CD4-positive, alpha-beta T cell (primary cell): ENCODE measurements at regions of chr5 and their contacts with region 1.

Region 1: GRCh38 chr5:142713121-142713706 is 27.3 kb upstream of the FGF1 start:
- DNase-seq: peak; percentile 70 to 93 (median 79)
- ATAC-seq: peak; percentile 93
- H3K4me3 ChIP-seq: peak overlapping the region; percentile 50
- H3K4me3 Mint-ChIP-seq: peak overlapping the region; percentile 76
- H3K27ac ChIP-seq: no peak overlapping the region
- H3K27ac Mint-ChIP-seq: no peak overlapping the region
- H3K4me1 ChIP-seq: peaks cover 15% of the 10 kb centered on the region
- H3K4me1 Mint-ChIP-seq: peaks cover 17% of the 10 kb centered on the region
- H3K27me3 ChIP-seq: peaks cover 0 to 3% of the 10 kb centered on the region in 2 experiments
- H3K27me3 Mint-ChIP-seq: peaks cover 9% of the 10 kb centered on the region
- CTCF ChIP-seq: peak; percentile 99

Region 2: DNA sequence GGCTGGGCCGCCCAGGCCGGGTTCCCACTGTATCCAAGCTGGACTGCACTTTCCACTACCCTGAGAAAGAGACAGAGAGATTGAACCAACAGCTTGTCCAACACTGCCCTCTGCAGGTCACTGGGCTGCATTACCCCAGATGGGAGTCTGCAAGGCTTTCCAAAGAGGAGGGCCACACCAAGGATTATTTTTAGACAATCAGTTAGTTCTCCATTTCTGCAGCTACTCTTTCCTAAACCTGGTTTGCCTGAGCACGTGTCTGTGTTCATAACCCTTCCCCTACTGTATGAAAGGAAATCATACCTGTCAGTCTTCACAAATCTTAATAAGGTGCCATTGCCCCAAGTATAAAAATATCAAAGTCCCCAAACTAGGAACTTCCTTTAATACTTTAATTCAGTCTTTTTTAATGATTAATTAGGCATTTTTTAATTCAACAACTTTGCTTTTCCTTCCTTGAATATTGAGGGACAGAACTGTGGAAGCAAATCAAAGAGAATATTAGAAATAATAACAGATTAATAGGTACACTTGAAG is 14.0 kb before region 1 on chr5:
- CTCF ChIA-PET with region 1: interaction called, 23 read pairs
- POLR2A ChIA-PET with region 1: no interaction called
- intact Hi-C with region 1: no loop called
- DNase-seq: peak; percentile 52 to 83 (median 72)
- ATAC-seq: peak; percentile 98
- H3K4me3 ChIP-seq: no peak overlapping the region
- H3K4me3 Mint-ChIP-seq: no peak overlapping the region
- H3K27ac ChIP-seq: no peak overlapping the region
- H3K27ac Mint-ChIP-seq: no peak overlapping the region
- H3K4me1 ChIP-seq: no peaks in the 10 kb centered on the region
- H3K4me1 Mint-ChIP-seq: no peaks in the 10 kb centered on the region
- H3K27me3 ChIP-seq: no peaks in the 10 kb centered on the region
- H3K27me3 Mint-ChIP-seq: no peaks in the 10 kb centered on the region
- CTCF ChIP-seq: peak; percentile 82

Region 3: GRCh38 chr5:142872795-142873194 is 159.6 kb after region 1 on chr5:
- CTCF ChIA-PET with region 1: interaction called, 9 read pairs
- POLR2A ChIA-PET with region 1: no interaction called
- intact Hi-C with region 1: loop called (anchors 1 to 2 kb)
- DNase-seq: peak in 2 of 14 experiments; percentile 17 to 34
- ATAC-seq: no peak
- H3K4me3 ChIP-seq: no peak overlapping the region
- H3K4me3 Mint-ChIP-seq: no peak overlapping the region
- H3K27ac ChIP-seq: no peak overlapping the region
- H3K27ac Mint-ChIP-seq: no peak overlapping the region
- H3K4me1 ChIP-seq: no peaks in the 10 kb centered on the region
- H3K4me1 Mint-ChIP-seq: no peaks in the 10 kb centered on the region
- H3K27me3 ChIP-seq: no peaks in the 10 kb centered on the region
- H3K27me3 Mint-ChIP-seq: no peaks in the 10 kb centered on the region
- CTCF ChIP-seq: no peak

Region 4: GRCh38 chr5:142888469-142889085 is 175.4 kb after region 1 on chr5:
- CTCF ChIA-PET with region 1: interaction called, 21 read pairs
- POLR2A ChIA-PET with region 1: no interaction called
- intact Hi-C with region 1: no loop called
- DNase-seq: peak in 4 of 14 experiments; percentile 28 to 53 (median 42)
- ATAC-seq: peak; percentile 37
- H3K4me3 ChIP-seq: no peak overlapping the region
- H3K4me3 Mint-ChIP-seq: no peak overlapping the region
- H3K27ac ChIP-seq: no peak overlapping the region
- H3K27ac Mint-ChIP-seq: no peak overlapping the region
- H3K4me1 ChIP-seq: no peaks in the 10 kb centered on the region
- H3K4me1 Mint-ChIP-seq: no peaks in the 10 kb centered on the region
- H3K27me3 ChIP-seq: no peaks in the 10 kb centered on the region
- H3K27me3 Mint-ChIP-seq: no peaks in the 10 kb centered on the region
- CTCF ChIP-seq: peak; percentile 84